HepG2 (cell line): ENCODE measurements at regions of chr10 and their contacts with region 1.

Region 1: DNA sequence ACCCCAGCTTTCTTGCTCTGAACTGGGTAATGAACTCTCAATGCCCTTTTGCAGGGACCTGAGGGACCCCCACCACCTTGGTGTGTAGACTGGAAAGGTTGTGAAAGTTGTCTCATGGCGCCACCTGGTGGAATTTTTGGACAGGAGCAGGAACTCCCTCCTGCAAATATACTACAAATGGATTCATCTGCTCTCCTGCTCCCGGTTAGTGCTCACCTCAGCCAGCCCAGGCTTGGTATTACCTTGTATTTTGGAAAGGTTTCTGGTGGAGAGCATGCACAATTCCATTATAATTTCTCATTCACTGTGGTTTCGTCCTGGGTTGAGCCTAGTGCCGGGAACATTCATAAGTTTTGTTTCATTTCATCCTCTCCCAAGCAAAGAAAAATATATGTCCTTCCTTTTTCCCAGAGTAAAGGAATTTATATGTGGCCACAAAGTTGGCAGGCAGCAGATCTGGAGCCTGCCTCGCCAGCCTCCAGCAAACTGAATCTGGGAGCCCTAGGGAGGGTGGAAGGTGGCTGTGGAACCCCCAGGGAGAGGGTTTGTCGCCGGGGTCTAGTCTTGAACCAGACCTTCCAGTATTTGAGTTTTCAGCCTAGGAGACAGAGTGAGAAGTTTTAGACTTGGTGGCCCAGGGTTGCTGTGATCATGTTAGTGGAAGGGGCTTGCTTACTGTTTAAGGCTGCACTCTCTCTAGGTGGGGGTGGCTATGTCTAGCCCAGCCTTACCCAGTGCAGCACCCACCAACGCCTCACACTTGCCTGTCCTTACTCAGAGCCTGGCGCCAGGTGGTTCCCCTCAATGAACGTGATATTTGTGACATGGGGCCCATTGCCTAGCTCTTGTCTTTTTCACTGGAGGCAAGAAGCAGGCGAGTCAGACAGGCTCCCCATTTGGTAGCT is 9.5 kb downstream of the FAM241B start:
- DNase-seq: peak; percentile 56
- ATAC-seq: peak; percentile 82
- H3K4me3 ChIP-seq: no peak overlapping the region
- H3K27ac ChIP-seq: no peak overlapping the region
- H3K4me1 ChIP-seq: no peaks in the 10 kb centered on the region
- H3K27me3 ChIP-seq: no peaks in the 10 kb centered on the region; a peak in 1 of 5 replicates
- CTCF ChIP-seq: peak; percentile 81
- EP300 ChIP-seq: no peak
- POLR2A ChIP-seq: no peak
- RAD21 ChIP-seq: peak; percentile 67

Region 2: DNA sequence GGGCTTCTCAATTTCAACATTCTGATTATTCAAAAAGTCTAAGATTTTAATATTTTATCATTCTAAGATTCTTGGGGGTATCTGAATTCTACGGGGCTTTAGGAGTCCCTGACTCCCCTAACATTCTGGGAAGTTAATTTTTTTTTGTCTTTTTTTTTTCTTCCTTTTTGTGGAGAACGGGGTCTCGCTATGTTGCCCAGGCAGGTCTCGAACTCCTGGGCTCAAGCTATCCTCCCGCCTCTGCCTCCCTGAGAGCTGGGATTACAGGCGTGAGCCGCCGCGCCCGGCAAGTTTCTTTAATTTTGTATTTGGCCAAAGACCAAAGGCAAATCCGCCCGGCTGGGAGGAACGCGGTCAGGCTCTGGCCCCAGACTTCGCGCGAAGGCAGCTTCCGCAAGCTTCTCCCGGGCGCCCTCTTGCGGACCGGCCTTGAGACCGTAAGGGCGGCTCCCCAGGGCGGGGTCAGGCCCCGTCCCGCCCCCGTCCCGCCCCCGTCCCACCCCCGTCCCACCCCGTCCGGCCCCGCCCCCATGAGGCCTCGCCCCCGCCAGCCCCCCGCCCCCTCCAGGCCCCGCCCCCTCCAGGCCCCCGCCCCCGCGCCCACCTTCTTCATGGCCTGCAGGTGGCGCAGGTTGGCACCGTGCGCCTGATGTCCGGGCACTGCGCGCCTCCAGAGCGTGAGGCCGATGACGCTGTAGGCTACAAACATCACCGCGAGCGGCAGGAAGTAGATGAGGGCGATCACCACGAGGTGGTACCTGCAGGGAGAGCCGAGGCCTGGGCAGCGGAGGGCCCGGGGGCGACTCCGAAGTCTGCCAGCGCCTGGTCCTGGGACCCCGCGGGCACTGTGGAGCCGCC is 231.0 kb before region 1 on chr10:
- CTCF ChIA-PET with region 1: interaction called, 3 read pairs
- POLR2A ChIA-PET with region 1: no interaction called
- in situ Hi-C with region 1: loop called (anchors 5 kb)
- intact Hi-C with region 1: no loop called
- DNase-seq: peak; percentile 80
- ATAC-seq: peak; percentile 81
- H3K4me3 ChIP-seq: peak overlapping the region in 1 of 3 experiments; percentile 21; a peak in 2 of 6 replicates
- H3K27ac ChIP-seq: no peak overlapping the region
- H3K4me1 ChIP-seq: peaks cover 13% of the 10 kb centered on the region
- H3K27me3 ChIP-seq: 0 out of 5 replicates have a peak, but pooled peaks cover 0 to 4% of the 10 kb centered on the region in 2 experiments
- CTCF ChIP-seq: peak; percentile 79
- EP300 ChIP-seq: no peak
- POLR2A ChIP-seq: no peak
- RAD21 ChIP-seq: peak; percentile 44

Region 3: GRCh38 chr10:69515699-69516259 is 123.8 kb before region 1 on chr10:
- CTCF ChIA-PET with region 1: interaction called, 71 read pairs
- POLR2A ChIA-PET with region 1: interaction called, 3 read pairs
- in situ Hi-C with region 1: loop called (anchors 5 kb)
- intact Hi-C with region 1: loop called (anchors 1 kb)
- DNase-seq: peak; percentile 47
- ATAC-seq: peak; percentile 98
- H3K4me3 ChIP-seq: no peak overlapping the region
- H3K27ac ChIP-seq: no peak overlapping the region
- H3K4me1 ChIP-seq: no peaks in the 10 kb centered on the region
- H3K27me3 ChIP-seq: no peaks in the 10 kb centered on the region; a peak in 1 of 5 replicates
- CTCF ChIP-seq: peak; percentile 94
- EP300 ChIP-seq: no peak
- POLR2A ChIP-seq: no peak
- RAD21 ChIP-seq: peak; percentile 87

Region 4: GRCh38 chr10:69716711-69717560 is 77.4 kb after region 1 on chr10:
- CTCF ChIA-PET with region 1: interaction called, 25 read pairs
- POLR2A ChIA-PET with region 1: no interaction called
- in situ Hi-C with region 1: loop called (anchors 5 kb)
- intact Hi-C with region 1: loop called (anchors 1 kb)
- DNase-seq: peak; percentile 35
- ATAC-seq: peak; percentile 91
- H3K4me3 ChIP-seq: no peak overlapping the region
- H3K27ac ChIP-seq: no peak overlapping the region
- H3K4me1 ChIP-seq: no peaks in the 10 kb centered on the region
- H3K27me3 ChIP-seq: peaks cover 0 to 28% of the 10 kb centered on the region in 2 experiments; a peak in 3 of 5 replicates
- CTCF ChIP-seq: peak; percentile 86
- EP300 ChIP-seq: no peak
- POLR2A ChIP-seq: no peak
- RAD21 ChIP-seq: peak; percentile 82

Region 5: GRCh38 chr10:69914398-69915214 is 275.1 kb after region 1 on chr10:
- CTCF ChIA-PET with region 1: no interaction called
- POLR2A ChIA-PET with region 1: no interaction called
- in situ Hi-C with region 1: no loop called
- intact Hi-C with region 1: loop called (anchors 10 kb)
- DNase-seq: peak; percentile 45
- ATAC-seq: peak; percentile 93
- H3K4me3 ChIP-seq: no peak overlapping the region
- H3K27ac ChIP-seq: no peak overlapping the region
- H3K4me1 ChIP-seq: no peaks in the 10 kb centered on the region
- H3K27me3 ChIP-seq: peaks cover 7 to 33% of the 10 kb centered on the region in 2 experiments; a peak in 4 of 5 replicates
- CTCF ChIP-seq: peak; percentile 92
- EP300 ChIP-seq: no peak
- POLR2A ChIP-seq: no peak
- RAD21 ChIP-seq: peak; percentile 89